ENCODE measurements at regions of chr10 and their contacts with region 1.

Region 1: GRCh38 chr10:50224330-50224952 is 26.9 kb downstream of the ASAH2 start:
- DNase-seq: peak; percentile 13
- H3K4me3 ChIP-seq: no peak overlapping the region
- H3K27ac ChIP-seq: no peak overlapping the region
- H3K4me1 ChIP-seq: no peaks in the 10 kb centered on the region
- H3K27me3 ChIP-seq: no peaks in the 10 kb centered on the region
- CTCF ChIP-seq: peak; percentile 25 to 34 (median 29)
- EP300 ChIP-seq: no peak
- POLR2A ChIP-seq: no peak

Region 2: GRCh38 chr10:49592726-49593563 is 631.5 kb before region 1 on chr10:
- in situ Hi-C with region 1: loop called in 2 of 4 experiments (anchors 25 kb)
- intact Hi-C with region 1: no loop called
- DNase-seq: peak; percentile 60
- H3K4me3 ChIP-seq: no peak overlapping the region
- H3K27ac ChIP-seq: no peak overlapping the region
- H3K4me1 ChIP-seq: no peaks in the 10 kb centered on the region
- H3K27me3 ChIP-seq: peaks cover 5% of the 10 kb centered on the region
- CTCF ChIP-seq: peak; percentile 70 to 87 (median 82)
- EP300 ChIP-seq: no peak
- POLR2A ChIP-seq: no peak

Measured in transverse colon (tissue), 4 donors.